Gastrocnemius medialis (tissue), 4 donors: ENCODE measurements at regions of chr3 and their contacts with region 1.

Region 1: DNA sequence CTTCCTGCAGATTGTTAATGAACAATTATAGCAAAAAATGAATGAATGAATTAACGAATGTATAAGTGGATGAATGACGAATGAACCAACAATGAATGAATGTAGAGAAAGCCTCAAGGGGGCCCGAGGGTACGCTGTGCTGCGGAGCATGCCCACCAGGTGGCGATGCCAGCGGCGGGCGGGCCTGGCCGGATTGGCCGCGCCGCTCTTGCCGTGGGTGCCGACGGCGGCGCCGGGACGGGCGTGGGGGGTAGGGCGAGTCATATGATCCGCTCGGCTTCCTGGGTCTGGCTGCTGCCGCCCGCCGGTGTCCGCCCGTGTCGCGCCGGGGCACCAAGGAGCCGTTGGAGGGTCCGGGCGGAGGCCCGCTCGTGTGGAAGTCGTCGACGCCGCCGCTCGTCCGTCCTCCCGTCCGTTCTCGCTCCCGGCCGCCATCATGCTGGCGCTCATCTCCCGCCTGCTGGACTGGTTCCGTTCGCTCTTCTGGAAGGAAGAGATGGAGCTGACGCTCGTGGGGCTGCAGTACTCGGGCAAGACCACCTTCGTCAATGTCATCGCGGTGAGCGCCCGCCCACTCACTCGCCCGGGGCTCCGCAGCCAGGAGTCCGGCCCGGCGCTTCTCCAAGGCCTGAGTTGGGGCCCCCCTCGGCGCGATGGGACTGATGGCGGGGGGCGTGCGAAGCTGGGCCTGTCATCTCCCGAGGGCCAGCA is at the start of gene ARL8B:
- DNase-seq: peak; percentile 82 to 89
- ATAC-seq: peak; percentile 70 to 75
- H3K4me3 ChIP-seq: peak within 1 kb of the TSS; percentile 90 to 100 (median 98)
- H3K27ac ChIP-seq: peak within 1 kb of the TSS; percentile 96 to 100 (median 98)
- H3K4me1 ChIP-seq: peaks cover 34 to 40% of the 10 kb centered on the region in 2 donors
- H3K27me3 ChIP-seq: no peaks in the 10 kb centered on the region
- CTCF ChIP-seq: peak; percentile 89 to 98 (median 98)
- POLR2A ChIP-seq: peak; percentile 91 to 96
- total RNA-seq, gene ARL8B: 69.3 to 198 (median 95.0) TPM

Region 2: DNA sequence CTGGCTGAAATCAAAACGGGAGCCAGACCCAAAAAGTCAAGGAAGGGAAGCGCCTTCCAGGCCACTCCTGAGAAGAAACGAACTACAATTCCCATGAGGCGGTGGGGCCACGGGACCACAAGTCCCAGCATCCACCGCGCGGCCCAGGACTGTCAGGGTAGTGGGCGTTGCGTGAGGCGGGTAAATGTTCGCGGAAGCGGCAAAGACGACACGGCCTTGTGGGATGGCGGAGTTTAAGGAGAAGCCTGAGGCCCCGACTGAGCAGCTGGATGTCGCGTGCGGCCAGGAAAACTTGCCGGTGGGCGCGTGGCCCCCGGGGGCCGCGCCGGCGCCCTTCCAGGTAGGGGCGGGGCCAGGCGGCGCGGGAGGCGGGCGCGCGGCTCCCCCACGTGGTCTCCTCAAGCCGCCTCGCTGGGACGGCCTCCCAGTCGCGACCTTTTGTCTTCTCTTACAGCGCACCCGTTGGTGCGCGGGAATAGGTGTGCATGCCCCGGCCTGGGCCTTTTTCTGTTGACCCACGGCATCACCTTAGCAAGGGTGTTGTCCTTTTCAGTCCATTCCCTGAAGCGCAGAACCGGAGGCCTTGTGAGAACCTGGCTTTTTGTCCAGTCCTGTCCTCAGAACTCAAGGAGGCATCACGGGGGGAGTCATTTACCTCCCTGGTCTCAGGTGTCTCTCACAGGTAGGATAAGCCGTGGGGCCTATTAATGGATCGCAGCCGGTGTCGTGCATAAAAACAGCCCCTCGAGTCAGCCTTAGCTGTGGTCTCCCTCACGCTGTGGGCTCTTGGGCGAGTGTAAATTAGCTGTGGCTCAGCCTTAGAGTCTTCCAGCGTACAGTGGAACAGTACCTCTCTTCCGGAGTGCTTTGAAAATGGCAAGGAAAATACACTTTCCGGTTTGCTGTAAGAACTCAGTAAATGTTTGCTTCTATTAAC is 818.7 kb before region 1 on chr3 and contains the start of gene SETMAR:
- in situ Hi-C with region 1: no loop called
- intact Hi-C with region 1: loop called (anchors 2 kb)
- DNase-seq: peak; percentile 85 to 88
- ATAC-seq: peak; percentile 96 to 97
- H3K4me3 ChIP-seq: peak within 1 kb of the TSS; percentile 68 to 84 (median 78)
- H3K27ac ChIP-seq: peak within 1 kb of the TSS; percentile 87 to 95 (median 90)
- H3K4me1 ChIP-seq: peaks cover 32 to 38% of the 10 kb centered on the region in 2 donors
- H3K27me3 ChIP-seq: no peaks in the 10 kb centered on the region
- CTCF ChIP-seq: no peak
- POLR2A ChIP-seq: peak; percentile 61 to 71
- total RNA-seq, gene SETMAR: 3.7 to 10.4 (median 7.6) TPM

Region 3: DNA sequence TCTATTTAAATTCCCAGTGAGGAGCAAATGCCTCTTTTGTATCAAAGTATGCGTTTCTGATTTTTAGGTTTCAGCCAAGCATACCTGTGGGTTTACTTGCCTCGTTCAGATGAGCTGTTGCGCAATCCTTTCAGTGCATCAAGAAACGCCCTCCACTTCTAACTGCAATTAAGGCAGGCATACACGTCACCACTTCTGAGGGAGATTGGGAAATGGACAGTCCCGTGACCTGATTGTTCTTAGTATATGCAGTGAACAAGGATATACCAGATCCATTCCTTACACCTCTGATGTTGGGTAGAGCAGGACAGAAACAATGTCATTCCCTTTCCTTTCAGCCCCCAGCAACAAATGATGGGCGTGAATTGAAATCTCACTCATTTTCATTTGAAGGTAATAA is 410.0 kb before region 1 on chr3:
- in situ Hi-C with region 1: no loop called
- intact Hi-C with region 1: loop called (anchors 1 kb)
- DNase-seq: no peak
- ATAC-seq: no peak
- H3K4me3 ChIP-seq: no peak overlapping the region
- H3K27ac ChIP-seq: no peak overlapping the region
- H3K4me1 ChIP-seq: peaks cover 6 to 9% of the 10 kb centered on the region in 2 donors
- H3K27me3 ChIP-seq: no peaks in the 10 kb centered on the region
- CTCF ChIP-seq: no peak
- POLR2A ChIP-seq: no peak

Region 4: GRCh38 chr3:5071061-5071460 is 51.1 kb before region 1 on chr3:
- in situ Hi-C with region 1: no loop called
- intact Hi-C with region 1: loop called (anchors 2 kb)
- DNase-seq: no peak
- ATAC-seq: no peak
- H3K4me3 ChIP-seq: no peak overlapping the region
- H3K27ac ChIP-seq: no peak overlapping the region
- H3K4me1 ChIP-seq: peaks cover 9 to 10% of the 10 kb centered on the region in 2 donors
- H3K27me3 ChIP-seq: no peaks in the 10 kb centered on the region
- CTCF ChIP-seq: no peak
- POLR2A ChIP-seq: no peak

Region 5: GRCh38 chr3:5187156-5187919 is 65.2 kb after region 1 on chr3 and contains the start of gene EDEM1:
- in situ Hi-C with region 1: loop called in 1 of 4 experiments (anchors 10 kb)
- intact Hi-C with region 1: loop called (anchors 2 kb)
- DNase-seq: peak; percentile 93 to 96
- ATAC-seq: peak; percentile 81
- H3K4me3 ChIP-seq: peak within 1 kb of the TSS; percentile 85 to 94 (median 90)
- H3K27ac ChIP-seq: peak within 1 kb of the TSS; percentile 93 to 97 (median 96)
- H3K4me1 ChIP-seq: peaks cover 13 to 40% of the 10 kb centered on the region in 2 donors
- H3K27me3 ChIP-seq: no peaks in the 10 kb centered on the region
- CTCF ChIP-seq: no peak
- POLR2A ChIP-seq: peak; percentile 92 to 96
- total RNA-seq, gene EDEM1: 7.8 to 12.3 (median 11.4) TPM

Region 6: GRCh38 chr3:5260992-5261501 is 138.9 kb after region 1 on chr3:
- in situ Hi-C with region 1: no loop called
- intact Hi-C with region 1: no loop called
- DNase-seq: no peak
- ATAC-seq: no peak
- H3K4me3 ChIP-seq: no peak overlapping the region
- H3K27ac ChIP-seq: no peak overlapping the region
- H3K4me1 ChIP-seq: no peaks in the 10 kb centered on the region
- H3K27me3 ChIP-seq: no peaks in the 10 kb centered on the region
- CTCF ChIP-seq: no peak
- POLR2A ChIP-seq: no peak